Mammary epithelial cell (primary cell): ENCODE measurements at regions of chr3 and their contacts with region 1.

Region 1: DNA sequence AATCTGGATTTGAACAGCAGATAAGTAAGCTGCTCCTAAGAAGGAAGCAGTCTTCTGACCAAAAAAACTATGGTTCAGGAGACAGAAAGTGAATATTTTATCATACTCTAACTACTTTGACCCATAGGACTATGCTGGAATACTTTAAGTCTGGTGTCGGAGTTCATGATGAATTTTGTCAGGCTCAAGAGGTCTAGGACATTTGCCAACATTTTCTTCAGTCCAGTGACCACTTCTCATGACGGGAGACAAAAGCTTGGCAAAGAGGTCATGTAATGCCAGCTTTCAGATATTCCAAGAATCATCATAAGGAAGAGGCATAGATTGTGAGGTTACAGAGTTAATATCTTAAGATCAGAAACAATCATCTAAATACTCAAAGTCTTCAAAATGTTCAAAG is 20.5 kb upstream of the DCBLD2 start:
- DNase-seq: no peak
- H3K4me3 ChIP-seq: no peak overlapping the region
- H3K27ac ChIP-seq: no peak overlapping the region
- H3K4me1 ChIP-seq: peaks cover 34% of the 10 kb centered on the region
- H3K27me3 ChIP-seq: no peaks in the 10 kb centered on the region
- CTCF ChIP-seq: no peak

Region 2: DNA sequence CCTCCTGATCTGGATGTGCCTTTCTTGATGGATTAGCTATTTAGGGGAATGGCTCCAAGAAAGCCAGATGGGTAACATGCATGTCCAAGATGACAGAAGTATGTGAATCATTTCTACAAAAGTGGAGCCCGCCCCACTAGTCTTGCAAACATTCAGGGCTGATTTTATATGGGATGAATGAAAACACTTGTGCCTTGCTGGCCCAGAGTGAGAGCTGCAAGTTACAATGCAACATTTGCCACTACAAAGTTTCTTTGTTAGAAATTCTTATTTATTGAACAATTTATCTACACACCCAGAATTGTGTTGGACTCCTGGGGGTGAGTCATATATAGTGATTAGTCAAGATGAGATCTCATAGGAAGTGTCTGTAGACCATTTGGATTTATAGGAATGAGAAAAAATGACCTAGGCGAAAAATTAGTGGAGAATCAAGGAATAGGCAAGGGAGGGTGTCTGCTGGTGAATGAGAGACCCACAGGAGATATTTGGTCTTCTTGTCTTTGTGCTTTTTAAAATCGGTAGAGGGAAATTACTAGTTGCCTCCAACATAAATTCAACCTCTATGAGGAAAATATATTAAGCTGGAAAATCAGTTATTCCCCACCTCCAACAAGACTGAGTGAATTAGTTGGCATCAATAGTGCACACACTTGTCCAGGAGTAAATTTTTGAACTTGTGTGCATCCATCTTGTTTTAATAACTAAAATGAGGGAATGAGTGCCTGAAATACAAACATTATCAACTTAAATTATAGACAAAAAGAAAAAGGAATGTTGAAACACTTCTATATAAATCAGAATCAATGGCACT is 33.0 kb after region 1 on chr3:
- CTCF ChIA-PET with region 1: no interaction called
- dilution Hi-C with region 1: loop called (anchors 5 kb)
- in situ Hi-C with region 1: no loop called
- intact Hi-C with region 1: loop called (anchors 2 kb)
- DNase-seq: peak; percentile 74
- H3K4me3 ChIP-seq: no peak overlapping the region
- H3K27ac ChIP-seq: peak overlapping the region; percentile 19
- H3K4me1 ChIP-seq: peaks cover 22% of the 10 kb centered on the region
- H3K27me3 ChIP-seq: no peaks in the 10 kb centered on the region
- CTCF ChIP-seq: no peak

Region 3: DNA sequence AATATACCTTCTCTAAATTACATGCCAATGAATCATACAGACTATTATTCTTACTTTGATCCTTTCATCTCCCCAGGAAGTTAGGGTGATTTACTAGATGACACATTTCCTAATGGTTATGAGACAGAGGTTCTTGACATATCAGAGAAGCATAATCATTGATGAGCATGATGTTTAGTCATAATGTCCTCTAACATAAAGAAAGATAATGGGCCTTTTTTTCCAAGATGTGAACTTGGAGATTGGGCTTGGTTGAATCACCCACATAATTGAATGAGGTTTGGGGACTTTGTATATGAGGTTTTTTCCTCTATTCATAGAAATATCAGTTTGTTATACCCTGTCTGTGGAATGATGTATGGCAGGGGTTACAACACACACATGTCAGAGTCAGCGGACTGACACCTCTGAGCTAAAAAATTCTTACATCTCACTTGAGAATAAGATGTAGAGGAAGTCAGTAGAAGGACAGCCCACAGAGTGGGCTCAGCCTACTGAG is 49.3 kb after region 1 on chr3:
- CTCF ChIA-PET with region 1: no interaction called
- dilution Hi-C with region 1: no loop called
- in situ Hi-C with region 1: no loop called
- intact Hi-C with region 1: loop called (anchors 1 kb)
- DNase-seq: peak; percentile 96
- H3K4me3 ChIP-seq: no peak overlapping the region
- H3K27ac ChIP-seq: peak overlapping the region; percentile 95
- H3K4me1 ChIP-seq: peaks cover 46% of the 10 kb centered on the region
- H3K27me3 ChIP-seq: no peaks in the 10 kb centered on the region
- CTCF ChIP-seq: no peak

Region 4: DNA sequence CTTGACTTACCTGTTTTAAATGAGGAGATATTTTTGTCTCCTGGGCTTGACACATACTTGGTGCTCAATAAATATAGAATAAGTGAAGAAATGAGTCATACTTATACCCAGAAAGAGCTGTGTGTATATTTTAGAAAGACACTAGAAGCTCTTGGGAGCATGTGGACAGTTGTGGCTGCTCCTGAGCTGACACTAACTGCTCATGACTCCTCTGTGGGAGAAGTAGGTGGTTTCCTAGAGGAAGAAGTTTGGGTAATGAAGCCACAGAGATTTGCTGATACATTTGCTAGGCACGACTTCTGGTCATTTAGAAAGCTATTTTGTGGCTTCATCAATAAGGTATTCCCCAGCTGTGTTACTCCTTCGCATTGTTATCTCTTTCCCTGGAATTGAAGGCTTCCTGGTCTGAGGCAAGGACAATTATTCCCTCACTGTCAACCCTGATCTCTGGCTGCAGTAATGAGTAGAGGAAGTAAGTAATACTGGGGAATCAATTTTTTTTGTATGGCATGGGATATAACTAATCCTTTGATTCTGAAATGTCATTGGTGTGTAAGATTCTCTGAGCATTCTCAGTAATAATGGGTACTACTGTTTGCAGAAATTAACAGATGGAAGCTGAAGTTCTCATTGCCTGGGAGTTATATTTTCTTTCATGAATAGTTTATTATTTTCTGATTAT is 59.1 kb after region 1 on chr3:
- CTCF ChIA-PET with region 1: interaction called, 4 read pairs
- dilution Hi-C with region 1: no loop called
- in situ Hi-C with region 1: no loop called
- intact Hi-C with region 1: loop called (anchors 2 kb)
- DNase-seq: peak; percentile 93
- H3K4me3 ChIP-seq: peak overlapping the region; percentile 34 to 83 (median 73)
- H3K27ac ChIP-seq: peak overlapping the region; percentile 81
- H3K4me1 ChIP-seq: peaks cover 45% of the 10 kb centered on the region
- H3K27me3 ChIP-seq: no peaks in the 10 kb centered on the region
- CTCF ChIP-seq: no peak